Activated T-helper 1 cell treated with anti-CD3 and anti-CD28 coated beads, Interleukin-12 subunit alpha, Interleukin-12 subunit beta, Interleukin-2, Interleukin-4 antibody, amounts not matched to agents 30 ng/mL and 10 ng/mL and 1 ng/mL, durations not matched to agents 14 hours and 24 hours and 36 hours (primary cell): ENCODE measurements at regions of chr1 and their contacts with region 1.

Region 1: DNA sequence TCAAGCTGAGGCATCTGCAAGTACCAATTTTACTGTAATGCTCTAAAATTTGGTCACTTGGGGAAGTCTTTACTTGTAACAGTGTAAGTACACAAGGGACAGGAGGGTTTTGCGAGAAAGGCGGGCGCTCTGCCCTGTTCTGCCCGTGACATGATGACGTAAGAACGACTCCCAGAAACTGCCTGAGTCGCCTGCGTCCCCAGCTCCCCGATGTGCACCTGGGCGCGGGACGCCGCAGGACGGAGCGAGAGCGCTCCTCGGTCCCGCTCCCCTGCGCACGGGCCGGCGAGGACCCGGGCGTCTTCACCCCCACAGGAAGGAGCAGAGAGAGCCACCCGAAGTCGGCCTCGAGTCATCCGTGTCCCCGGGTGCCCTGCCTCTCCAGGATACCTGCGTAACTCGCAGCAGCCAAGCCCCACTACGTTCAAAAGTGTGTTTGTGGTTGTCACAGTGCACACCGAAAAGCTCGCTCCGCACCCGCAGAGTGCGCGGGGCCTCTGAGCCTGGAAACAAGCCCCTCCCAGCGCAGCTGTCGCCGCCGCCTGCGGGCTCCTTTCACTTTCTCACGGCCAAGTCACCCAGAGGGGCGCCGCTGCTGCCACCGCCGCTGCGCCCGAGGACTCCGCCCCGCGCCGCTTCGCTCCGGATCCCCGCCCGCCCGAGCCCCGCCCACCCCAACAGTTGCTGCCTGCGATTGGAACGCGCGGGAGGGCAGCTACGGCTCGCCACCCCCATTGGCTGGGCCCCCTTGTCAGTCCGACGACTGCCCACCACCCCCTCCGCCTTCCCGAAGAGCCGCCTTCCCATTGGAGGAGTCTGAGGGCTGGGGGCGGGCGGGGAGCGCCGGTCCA is 3.2 kb upstream of the ZBTB18 start:
- DNase-seq: peak; percentile 93
- H3K4me3 Mint-ChIP-seq: peak overlapping the region; percentile 92
- H3K27ac Mint-ChIP-seq: peak overlapping the region; percentile 91
- H3K4me1 Mint-ChIP-seq: peaks cover 36% of the 10 kb centered on the region
- H3K27me3 Mint-ChIP-seq: peaks cover 30% of the 10 kb centered on the region

Region 2: GRCh38 chr1:243421784-243422183 is 626.1 kb before region 1 on chr1:
- intact Hi-C with region 1: loop called (anchors 5 kb)
- DNase-seq: peak; percentile 52
- H3K4me3 Mint-ChIP-seq: peak overlapping the region; percentile 61
- H3K27ac Mint-ChIP-seq: peak overlapping the region; percentile 57
- H3K4me1 Mint-ChIP-seq: peaks cover 44% of the 10 kb centered on the region
- H3K27me3 Mint-ChIP-seq: no peaks in the 10 kb centered on the region

Region 3: GRCh38 chr1:243596431-243597062 is 451.3 kb before region 1 on chr1:
- intact Hi-C with region 1: loop called (anchors 5 kb)
- DNase-seq: peak; percentile 32
- H3K4me3 Mint-ChIP-seq: peak overlapping the region; percentile 75
- H3K27ac Mint-ChIP-seq: peak overlapping the region; percentile 94
- H3K4me1 Mint-ChIP-seq: peaks cover 32% of the 10 kb centered on the region
- H3K27me3 Mint-ChIP-seq: no peaks in the 10 kb centered on the region

Region 4: GRCh38 chr1:244074559-244075171 is 26.8 kb after region 1 on chr1:
- intact Hi-C with region 1: loop called (anchors 1 kb)
- DNase-seq: peak; percentile 45
- H3K4me3 Mint-ChIP-seq: peak overlapping the region; percentile 72
- H3K27ac Mint-ChIP-seq: peak overlapping the region; percentile 53
- H3K4me1 Mint-ChIP-seq: peaks cover 22% of the 10 kb centered on the region
- H3K27me3 Mint-ChIP-seq: peaks cover 15% of the 10 kb centered on the region

Region 5: DNA sequence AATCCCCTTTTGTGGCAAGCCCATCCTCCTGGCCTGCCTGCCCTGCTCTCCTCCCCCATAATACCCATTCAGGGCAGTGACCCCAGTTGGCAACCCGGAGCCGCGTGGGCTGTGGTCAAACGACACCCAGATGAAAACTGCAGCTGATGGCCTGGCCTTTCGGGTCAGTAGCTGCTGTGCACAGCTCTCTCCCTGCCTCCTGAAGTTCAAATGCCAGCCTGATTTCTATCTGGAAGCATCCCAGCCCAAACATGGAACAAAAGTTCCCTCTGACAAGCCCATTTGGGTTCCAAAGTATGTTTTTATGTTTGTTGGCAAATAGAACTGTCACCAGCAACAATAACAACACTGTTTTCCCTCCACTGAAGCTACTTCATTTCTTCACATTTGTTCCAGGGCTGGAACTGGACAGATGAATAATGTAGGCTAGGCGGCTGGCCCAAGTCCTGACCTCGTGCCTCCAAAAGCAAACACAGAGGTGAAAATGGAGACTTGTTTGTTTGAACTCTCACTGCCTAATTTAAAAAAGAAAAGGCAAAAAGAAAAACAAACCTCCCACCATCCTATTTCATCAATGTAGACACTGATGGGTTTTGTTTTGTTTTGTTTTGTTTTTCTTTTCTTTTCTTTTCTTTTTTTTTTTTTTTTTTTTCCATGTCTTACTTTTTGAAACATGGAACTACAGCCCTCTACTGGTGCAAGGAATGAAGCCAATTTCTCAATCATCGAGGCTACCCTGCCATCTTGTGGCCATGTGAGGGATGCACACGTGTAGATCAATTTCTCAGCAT is 224.8 kb after region 1 on chr1:
- intact Hi-C with region 1: loop called (anchors 2 kb)
- DNase-seq: peak; percentile 52
- H3K4me3 Mint-ChIP-seq: no peak overlapping the region
- H3K27ac Mint-ChIP-seq: no peak overlapping the region
- H3K4me1 Mint-ChIP-seq: peaks cover 8% of the 10 kb centered on the region
- H3K27me3 Mint-ChIP-seq: peaks cover 3% of the 10 kb centered on the region

Region 6: GRCh38 chr1:244302889-244303613 is 255.2 kb after region 1 on chr1:
- intact Hi-C with region 1: loop called (anchors 1 kb)
- DNase-seq: no peak
- H3K4me3 Mint-ChIP-seq: no peak overlapping the region
- H3K27ac Mint-ChIP-seq: no peak overlapping the region
- H3K4me1 Mint-ChIP-seq: peaks cover 12% of the 10 kb centered on the region
- H3K27me3 Mint-ChIP-seq: peaks cover 4% of the 10 kb centered on the region

Region 7: GRCh38 chr1:244451951-244452795 is 404.3 kb after region 1 on chr1:
- intact Hi-C with region 1: loop called (anchors 2 kb)
- DNase-seq: peak; percentile 98
- H3K4me3 Mint-ChIP-seq: peak overlapping the region; percentile 95
- H3K27ac Mint-ChIP-seq: peak overlapping the region; percentile 96
- H3K4me1 Mint-ChIP-seq: peaks cover 41% of the 10 kb centered on the region
- H3K27me3 Mint-ChIP-seq: no peaks in the 10 kb centered on the region